Sigmoid colon (tissue), 7 donors: ENCODE measurements at regions of chr15 and their contacts with region 1.

Region 1: GRCh38 chr15:88834211-88834812 is 31.1 kb downstream of the ACAN start:
- DNase-seq: no peak
- H3K4me3 ChIP-seq: no peak overlapping the region
- H3K27ac ChIP-seq: peak overlapping the region in 1 of 4 donors; percentile 26
- H3K4me1 ChIP-seq: no peaks in the 10 kb centered on the region
- H3K27me3 ChIP-seq: no peaks in the 10 kb centered on the region
- CTCF ChIP-seq: peak; percentile 34 to 63 (median 44)
- EP300 ChIP-seq: no peak
- POLR2A ChIP-seq: no peak

Region 2: DNA sequence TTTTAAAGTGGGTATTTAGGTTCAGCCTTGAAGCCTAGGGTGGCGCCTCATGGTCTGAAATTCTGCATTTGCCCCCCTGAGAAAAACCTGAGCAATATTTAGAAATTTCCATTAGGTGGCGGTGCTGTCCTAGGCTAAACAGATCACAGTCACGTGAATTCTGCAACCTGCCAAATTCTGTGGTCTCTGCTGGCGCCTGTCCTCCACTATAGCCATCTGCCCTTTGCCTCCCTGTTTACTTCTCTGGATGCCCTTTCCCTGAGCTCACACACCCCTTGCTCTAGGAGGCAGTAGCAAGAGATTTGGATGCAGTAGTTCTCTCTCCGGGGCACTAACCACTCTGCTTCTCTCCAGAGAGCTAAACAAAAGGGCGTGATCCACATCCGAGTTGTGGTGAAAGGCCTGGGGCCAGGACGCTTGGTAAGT is 357.7 kb before region 1 on chr15:
- intact Hi-C with region 1: loop called (anchors 5 kb)
- DNase-seq: no peak
- H3K4me3 ChIP-seq: no peak overlapping the region
- H3K27ac ChIP-seq: peak overlapping the region in 3 of 4 donors; percentile 5 to 67 (median 53)
- H3K4me1 ChIP-seq: peaks cover 0 to 9% (median 6%) of the 10 kb centered on the region in 4 donors
- H3K27me3 ChIP-seq: no peaks in the 10 kb centered on the region
- CTCF ChIP-seq: peak; percentile 30 to 64 (median 50)
- EP300 ChIP-seq: no peak
- POLR2A ChIP-seq: no peak

Region 3: DNA sequence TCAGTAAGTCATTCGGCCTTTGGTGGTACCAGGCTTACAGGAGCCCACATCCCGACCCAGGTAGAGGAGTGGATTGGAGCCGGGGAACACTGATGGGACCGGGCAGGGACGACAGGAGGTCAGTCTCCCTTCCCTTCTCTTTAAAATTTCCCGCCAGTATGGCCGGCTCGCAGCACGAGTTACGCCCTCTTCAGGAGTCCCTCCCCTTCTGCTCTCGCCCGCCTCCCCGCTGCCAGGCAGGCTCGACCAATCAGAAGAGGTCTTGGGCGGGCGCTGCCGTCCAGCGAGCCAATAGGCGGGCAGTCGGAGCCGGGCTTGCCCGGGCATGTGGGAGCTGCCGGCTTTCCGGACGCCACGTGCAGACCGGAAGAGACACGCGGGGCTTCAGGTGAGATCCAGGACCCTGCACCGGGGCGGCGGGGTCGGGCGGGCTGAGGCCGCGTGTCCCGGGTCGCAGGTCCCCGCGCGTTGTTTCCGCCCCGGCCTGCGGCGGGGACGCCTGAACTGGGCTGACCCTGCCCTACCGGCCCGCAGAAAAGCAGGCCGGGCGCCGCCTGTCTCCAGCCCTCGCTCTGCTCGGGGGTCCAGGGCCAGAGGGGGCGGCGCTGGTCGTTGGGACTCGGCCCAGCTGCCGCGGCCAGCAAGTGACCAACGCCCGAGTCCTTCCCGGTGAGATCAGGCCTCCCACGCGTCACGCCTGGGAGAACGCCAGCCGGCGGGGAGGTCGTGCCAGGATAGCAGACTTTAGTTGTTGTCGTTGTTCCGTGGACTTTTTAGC is 213.1 kb before region 1 on chr15 and contains the start of gene AEN:
- intact Hi-C with region 1: loop called (anchors 2 kb)
- DNase-seq: peak; percentile 98
- H3K4me3 ChIP-seq: peak within 1 kb of the TSS; percentile 67 to 96 (median 94)
- H3K27ac ChIP-seq: peak within 1 kb of the TSS; percentile 82 to 93 (median 86)
- H3K4me1 ChIP-seq: peaks cover 0 to 44% (median 41%) of the 10 kb centered on the region in 4 donors
- H3K27me3 ChIP-seq: no peaks in the 10 kb centered on the region
- CTCF ChIP-seq: no peak
- EP300 ChIP-seq: no peak
- POLR2A ChIP-seq: no peak
- total RNA-seq, gene AEN: 5.8 to 18.3 (median 9.4) TPM

Region 4: DNA sequence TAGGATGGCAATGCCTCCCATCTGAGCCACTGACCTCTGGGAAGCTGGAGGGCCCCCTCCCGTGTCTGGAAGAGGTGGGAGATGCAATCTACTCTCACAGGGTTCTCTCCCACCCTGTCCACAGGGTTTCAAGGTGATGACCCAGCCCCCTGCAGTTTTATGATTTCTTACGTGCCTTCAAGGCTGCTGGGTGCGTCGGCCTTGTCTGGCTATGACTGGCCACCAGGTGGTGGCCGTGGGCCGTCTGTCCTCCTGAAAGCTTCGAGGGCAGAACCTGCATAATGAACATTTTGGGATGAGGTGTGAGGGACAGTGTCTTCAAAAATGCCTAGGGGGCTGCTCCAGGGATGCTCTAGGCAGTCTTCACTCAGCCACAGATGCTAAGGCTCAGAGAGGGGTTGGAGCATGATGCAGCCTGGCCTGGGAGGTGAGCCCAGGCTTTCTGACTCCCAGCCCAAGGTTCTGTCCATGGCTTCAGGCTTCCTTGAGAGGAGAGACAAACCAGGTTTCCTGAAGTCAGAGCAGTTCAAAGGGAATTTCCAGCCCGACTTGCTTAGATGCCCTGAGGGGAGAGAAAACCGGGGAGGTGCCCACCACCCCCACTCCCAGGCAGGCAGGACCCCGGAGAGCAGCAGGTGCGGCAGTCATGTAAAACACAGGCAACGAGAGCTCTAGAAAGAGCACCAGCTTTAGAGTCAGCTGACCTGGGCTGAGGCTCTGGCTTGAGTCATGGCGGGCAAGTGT is 176.8 kb before region 1 on chr15:
- intact Hi-C with region 1: loop called (anchors 1 kb)
- DNase-seq: peak; percentile 68
- H3K4me3 ChIP-seq: no peak overlapping the region
- H3K27ac ChIP-seq: no peak overlapping the region
- H3K4me1 ChIP-seq: peaks cover 0 to 10% (median 0%) of the 10 kb centered on the region in 4 donors
- H3K27me3 ChIP-seq: no peaks in the 10 kb centered on the region
- CTCF ChIP-seq: peak; percentile 31 to 64 (median 56)
- EP300 ChIP-seq: no peak
- POLR2A ChIP-seq: no peak